Heart right ventricle (tissue), 16 donors: ENCODE measurements at regions of chr18 and their contacts with region 1.

Region 1: DNA sequence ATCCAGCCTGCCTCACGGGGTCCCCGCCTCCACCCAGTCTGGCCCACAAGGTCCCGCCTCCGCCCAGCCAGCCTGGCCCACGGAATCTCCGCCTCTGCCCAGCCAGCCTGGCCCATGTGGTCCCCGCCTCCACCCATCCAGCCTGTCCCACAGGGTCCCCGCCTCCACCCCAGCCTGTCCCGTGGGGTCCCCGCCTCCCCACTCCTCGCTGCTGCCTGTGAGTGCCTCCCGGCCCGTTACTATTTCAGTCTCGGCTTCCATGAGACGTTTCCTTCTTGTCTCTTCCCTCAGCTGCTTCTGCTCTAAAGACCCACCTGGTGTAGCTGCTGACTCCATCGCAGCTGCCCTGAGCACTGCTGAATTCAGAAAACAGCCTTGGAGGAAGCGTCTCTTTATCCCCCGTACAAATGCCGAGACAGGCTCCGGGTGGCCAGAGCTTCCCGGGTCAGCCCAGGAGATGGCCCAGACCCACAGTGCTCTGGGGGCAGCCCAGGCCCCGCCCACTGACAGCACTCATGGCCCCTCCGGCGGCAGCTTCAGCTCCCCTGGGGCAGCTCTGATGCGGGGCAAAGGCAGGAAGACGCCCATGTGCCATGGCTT is 69.8 kb downstream of the NFATC1 start:
- DNase-seq: peak; percentile 35 to 42
- ATAC-seq: peak; percentile 20 to 83 (median 60)
- H3K4me3 ChIP-seq: peak overlapping the region in 5 of 10 donors; percentile 8 to 41 (median 13)
- H3K27ac ChIP-seq: peak overlapping the region in 6 of 10 donors; percentile 22 to 71 (median 56)
- H3K4me1 ChIP-seq: peaks cover 5 to 32% (median 17%) of the 10 kb centered on the region in 9 donors
- H3K27me3 ChIP-seq: no peaks in the 10 kb centered on the region
- CTCF ChIP-seq: no peak

Region 2: DNA sequence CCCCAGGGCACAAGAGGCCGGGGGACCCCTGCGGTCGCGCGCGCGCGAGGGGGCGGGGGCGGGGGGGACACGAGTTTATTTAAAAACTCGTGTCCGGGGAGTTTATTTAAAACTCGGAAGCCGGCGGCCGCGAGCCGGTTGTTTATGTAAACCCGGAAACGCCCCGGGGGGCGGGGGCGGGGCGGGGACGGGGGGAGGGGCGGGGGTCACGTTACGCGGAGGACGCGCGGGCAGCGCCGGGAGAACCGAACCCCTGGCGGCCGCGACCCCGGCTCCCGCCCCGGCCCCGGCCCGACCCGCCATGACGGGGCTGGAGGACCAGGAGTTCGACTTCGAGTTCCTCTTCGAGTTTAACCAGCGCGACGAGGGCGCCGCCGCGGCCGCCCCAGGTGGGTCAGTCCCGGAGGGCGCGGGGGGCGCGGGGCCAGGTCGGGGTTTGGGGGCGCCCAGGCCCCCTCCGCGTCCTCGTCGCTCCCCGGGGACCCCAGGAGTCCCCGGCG is 65.4 kb before region 1 on chr18:
- intact Hi-C with region 1: loop called in 1 of 10 experiments (anchors 10 kb)
- DNase-seq: peak; percentile 54 to 84
- ATAC-seq: peak in 3 of 8 donors; percentile 21 to 32 (median 25)
- H3K4me3 ChIP-seq: peak overlapping the region; percentile 51 to 92 (median 83)
- H3K27ac ChIP-seq: peak overlapping the region; percentile 79 to 95 (median 86)
- H3K4me1 ChIP-seq: peaks cover 30 to 75% (median 58%) of the 10 kb centered on the region in 9 donors
- H3K27me3 ChIP-seq: peaks cover 0 to 16% (median 0%) of the 10 kb centered on the region in 7 donors
- CTCF ChIP-seq: peak in 1 of 9 donors; percentile 10